Naive thymus-derived CD4-positive, alpha-beta T cell (primary cell): ENCODE measurements at regions of chr2 and their contacts with region 1.

Region 1: GRCh38 chr2:238426568-238427434 is at the start of gene ASB1:
- DNase-seq: peak; percentile 62 to 89 (median 72)
- ATAC-seq: peak; percentile 87
- H3K4me3 ChIP-seq: peak within 1 kb of the TSS; percentile 90
- H3K4me3 Mint-ChIP-seq: peak within 1 kb of the TSS; percentile 90 to 97 (median 92)
- H3K27ac ChIP-seq: peak within 1 kb of the TSS; percentile 80
- H3K27ac Mint-ChIP-seq: peak within 1 kb of the TSS; percentile 87 to 95 (median 93)
- H3K4me1 ChIP-seq: peaks cover 3 to 15% of the 10 kb centered on the region in 2 donors
- H3K4me1 Mint-ChIP-seq: peaks cover 28 to 53% (median 49%) of the 10 kb centered on the region in 7 donors
- H3K27me3 ChIP-seq: no peaks in the 10 kb centered on the region
- H3K27me3 Mint-ChIP-seq: no peaks in the 10 kb centered on the region
- total RNA-seq, gene ASB1: 25.0 to 55.2 (median 33.1) TPM

Region 2: DNA sequence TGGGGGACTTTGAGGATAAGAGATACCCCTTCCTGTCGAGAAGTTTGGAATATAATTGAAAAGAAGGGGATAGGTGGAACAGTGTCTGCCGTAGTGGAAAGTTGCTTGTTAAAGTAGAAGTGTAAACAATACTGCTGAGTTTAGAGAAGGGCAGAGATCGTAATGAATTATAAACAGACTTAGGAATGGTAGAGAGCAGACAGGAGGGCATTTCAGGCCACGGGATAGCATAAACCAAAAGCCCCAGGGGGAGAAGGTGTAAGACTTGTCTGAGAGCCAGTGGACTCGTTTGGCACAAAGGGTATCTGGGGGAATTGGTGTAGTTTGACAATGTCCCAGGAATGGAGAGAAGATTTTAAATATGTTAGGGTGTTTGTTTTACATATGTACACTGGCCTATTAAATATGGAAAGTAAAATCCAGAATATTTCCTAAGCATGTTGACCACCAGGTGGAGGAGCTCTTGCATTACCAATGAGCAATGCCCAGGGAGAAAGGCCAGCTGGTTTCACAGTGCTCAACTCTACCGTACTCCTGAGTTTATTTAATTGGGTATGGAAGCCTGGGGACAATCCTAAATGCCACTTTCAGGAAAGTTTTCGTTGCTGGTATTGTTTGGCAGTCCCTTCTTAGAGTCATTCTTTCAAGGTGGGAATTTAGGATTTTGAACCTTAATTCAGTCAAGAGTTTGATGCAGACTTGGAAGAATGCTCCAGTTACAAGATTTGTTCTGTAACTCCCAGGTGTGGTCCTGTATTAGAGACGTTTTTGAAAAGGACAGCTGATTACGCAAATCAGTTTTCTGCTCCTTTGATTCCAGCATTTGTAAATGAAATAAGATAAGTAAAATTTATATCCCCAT is 1333.7 kb before region 1 on chr2:
- CTCF ChIA-PET with region 1: no interaction called
- POLR2A ChIA-PET with region 1: no interaction called
- intact Hi-C with region 1: no loop called
- DNase-seq: no peak
- ATAC-seq: no peak
- H3K4me3 ChIP-seq: no peak overlapping the region
- H3K4me3 Mint-ChIP-seq: no peak overlapping the region
- H3K27ac ChIP-seq: no peak overlapping the region
- H3K27ac Mint-ChIP-seq: no peak overlapping the region
- H3K4me1 ChIP-seq: no peaks in the 10 kb centered on the region
- H3K4me1 Mint-ChIP-seq: peaks cover 5 to 25% (median 13%) of the 10 kb centered on the region in 7 donors
- H3K27me3 ChIP-seq: no peaks in the 10 kb centered on the region
- H3K27me3 Mint-ChIP-seq: no peaks in the 10 kb centered on the region

Region 3: GRCh38 chr2:238320246-238320647 is 106.6 kb before region 1 on chr2 and contains the start of gene TRAF3IP1:
- CTCF ChIA-PET with region 1: no interaction called
- POLR2A ChIA-PET with region 1: no interaction called
- intact Hi-C with region 1: loop called in 1 of 2 experiments (anchors 1 kb)
- DNase-seq: peak; percentile 75 to 92 (median 86)
- ATAC-seq: peak; percentile 97
- H3K4me3 ChIP-seq: peak within 1 kb of the TSS; percentile 69
- H3K4me3 Mint-ChIP-seq: peak within 1 kb of the TSS; percentile 77 to 89 (median 82)
- H3K27ac ChIP-seq: peak within 1 kb of the TSS; percentile 51
- H3K27ac Mint-ChIP-seq: peak within 1 kb of the TSS in 6 of 9 donors; percentile 4 to 69 (median 45)
- H3K4me1 ChIP-seq: peaks cover 7 to 15% of the 10 kb centered on the region in 2 donors
- H3K4me1 Mint-ChIP-seq: peaks cover 9 to 29% (median 24%) of the 10 kb centered on the region in 7 donors
- H3K27me3 ChIP-seq: no peaks in the 10 kb centered on the region
- H3K27me3 Mint-ChIP-seq: peaks cover 0 to 34% (median 6%) of the 10 kb centered on the region in 5 donors
- total RNA-seq, gene TRAF3IP1: 6.2 to 13.3 (median 9.4) TPM

Region 4: DNA sequence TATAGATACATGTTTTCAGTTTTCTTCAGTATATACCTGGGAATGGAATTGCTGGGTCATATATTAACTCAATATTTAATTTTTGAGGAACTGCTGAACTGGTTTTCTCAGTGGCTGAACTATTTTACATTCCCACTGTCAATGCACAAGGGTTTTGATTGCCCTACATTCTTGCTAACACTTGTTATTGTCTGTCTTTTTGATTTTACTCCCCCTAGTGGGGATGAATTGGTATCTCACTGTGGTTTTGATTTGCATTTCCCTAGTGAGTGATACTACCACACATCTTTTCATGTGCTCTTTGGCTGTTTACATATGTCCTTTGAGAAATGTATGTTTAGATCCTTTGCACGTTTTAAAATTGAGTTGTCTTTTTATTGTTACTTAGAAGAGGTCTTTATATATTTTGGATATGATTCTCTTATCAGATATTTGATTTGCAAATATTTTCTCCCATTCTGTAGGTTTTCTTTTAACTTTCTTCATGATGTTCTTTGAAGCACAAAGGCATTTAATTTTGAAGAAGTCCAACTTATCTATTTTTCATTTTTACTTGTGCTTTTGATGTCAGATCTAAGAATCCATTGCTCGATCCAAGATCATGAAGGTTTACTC is 36.1 kb after region 1 on chr2:
- CTCF ChIA-PET with region 1: no interaction called
- POLR2A ChIA-PET with region 1: no interaction called
- intact Hi-C with region 1: loop called in 1 of 2 experiments (anchors 2 kb)
- DNase-seq: peak in 6 of 9 donors; percentile 16 to 67 (median 58)
- ATAC-seq: peak; percentile 76
- H3K4me3 ChIP-seq: no peak overlapping the region
- H3K4me3 Mint-ChIP-seq: no peak overlapping the region
- H3K27ac ChIP-seq: no peak overlapping the region
- H3K27ac Mint-ChIP-seq: no peak overlapping the region
- H3K4me1 ChIP-seq: no peaks in the 10 kb centered on the region
- H3K4me1 Mint-ChIP-seq: peaks cover 0 to 6% (median 0%) of the 10 kb centered on the region in 7 donors
- H3K27me3 ChIP-seq: no peaks in the 10 kb centered on the region
- H3K27me3 Mint-ChIP-seq: peaks cover 0 to 10% (median 0%) of the 10 kb centered on the region in 5 donors

Region 5: GRCh38 chr2:238493880-238494572 is 67.2 kb after region 1 on chr2:
- CTCF ChIA-PET with region 1: no interaction called
- POLR2A ChIA-PET with region 1: interaction called, 3 read pairs
- intact Hi-C with region 1: loop called in 1 of 2 experiments (anchors 2 kb)
- DNase-seq: peak in 7 of 9 donors; percentile 15 to 49 (median 45)
- ATAC-seq: peak; percentile 59
- H3K4me3 ChIP-seq: no peak overlapping the region
- H3K4me3 Mint-ChIP-seq: peak overlapping the region; percentile 14 to 86 (median 67)
- H3K27ac ChIP-seq: peak overlapping the region; percentile 26
- H3K27ac Mint-ChIP-seq: peak overlapping the region; percentile 56 to 95 (median 83)
- H3K4me1 ChIP-seq: peaks cover 8 to 27% of the 10 kb centered on the region in 2 donors
- H3K4me1 Mint-ChIP-seq: peaks cover 23 to 42% (median 38%) of the 10 kb centered on the region in 7 donors
- H3K27me3 ChIP-seq: no peaks in the 10 kb centered on the region
- H3K27me3 Mint-ChIP-seq: peaks cover 0 to 6% (median 0%) of the 10 kb centered on the region in 5 donors

Region 6: DNA sequence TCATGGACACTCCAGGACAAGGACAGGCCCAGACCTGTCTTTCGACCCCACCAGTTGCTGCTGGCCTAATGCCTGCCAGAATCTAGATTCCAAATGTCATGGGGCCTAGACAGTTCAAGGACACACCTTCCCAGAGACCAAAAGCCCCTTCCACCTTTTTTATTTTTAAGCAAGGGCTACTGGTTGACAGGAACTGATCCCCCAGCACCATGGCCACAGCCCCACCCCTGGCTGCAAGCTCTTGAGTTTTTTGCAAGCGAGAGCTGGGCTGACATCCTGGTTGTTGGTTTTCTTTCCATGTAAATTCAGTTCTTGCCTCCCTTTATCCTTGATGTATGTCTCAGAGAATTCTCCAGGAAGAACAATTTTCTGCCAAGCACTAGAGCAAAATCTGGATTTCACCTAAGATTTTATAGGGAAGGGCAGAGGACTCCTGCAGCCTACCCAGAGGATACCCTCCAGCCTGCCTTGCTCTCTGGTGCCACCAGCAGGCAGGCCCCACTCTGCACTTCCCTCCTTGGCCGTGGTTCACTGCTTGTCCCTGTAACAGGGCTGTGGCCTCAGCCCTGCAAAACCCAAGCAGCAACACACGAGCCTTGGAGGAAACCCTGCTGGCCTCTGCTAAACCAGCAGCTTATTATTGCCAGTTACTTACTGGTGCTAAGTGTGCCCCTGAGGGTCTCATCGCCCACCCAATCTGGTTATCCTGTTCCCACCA is 518.8 kb after region 1 on chr2:
- CTCF ChIA-PET with region 1: no interaction called
- POLR2A ChIA-PET with region 1: no interaction called
- intact Hi-C with region 1: no loop called
- DNase-seq: peak in 1 of 9 donors; percentile 19
- ATAC-seq: no peak
- H3K4me3 ChIP-seq: no peak overlapping the region
- H3K4me3 Mint-ChIP-seq: no peak overlapping the region
- H3K27ac ChIP-seq: no peak overlapping the region
- H3K27ac Mint-ChIP-seq: no peak overlapping the region
- H3K4me1 ChIP-seq: no peaks in the 10 kb centered on the region
- H3K4me1 Mint-ChIP-seq: peaks cover 5 to 12% (median 9%) of the 10 kb centered on the region in 7 donors
- H3K27me3 ChIP-seq: no peaks in the 10 kb centered on the region
- H3K27me3 Mint-ChIP-seq: peaks cover 0 to 14% (median 8%) of the 10 kb centered on the region in 5 donors

Region 7: GRCh38 chr2:239151201-239152131 is 724.7 kb after region 1 on chr2:
- CTCF ChIA-PET with region 1: no interaction called
- POLR2A ChIA-PET with region 1: no interaction called
- intact Hi-C with region 1: no loop called
- DNase-seq: peak in 1 of 9 donors; percentile 0
- ATAC-seq: no peak
- H3K4me3 ChIP-seq: no peak overlapping the region
- H3K4me3 Mint-ChIP-seq: peak overlapping the region in 2 of 10 donors; percentile 42 to 54
- H3K27ac ChIP-seq: peak overlapping the region; percentile 39
- H3K27ac Mint-ChIP-seq: peak overlapping the region; percentile 79 to 95 (median 88)
- H3K4me1 ChIP-seq: peaks cover 8 to 20% of the 10 kb centered on the region in 2 donors
- H3K4me1 Mint-ChIP-seq: peaks cover 9 to 37% (median 25%) of the 10 kb centered on the region in 7 donors
- H3K27me3 ChIP-seq: no peaks in the 10 kb centered on the region
- H3K27me3 Mint-ChIP-seq: no peaks in the 10 kb centered on the region